H1 (cell line): ENCODE measurements at regions of chr20 and their contacts with region 1.

Region 1: DNA sequence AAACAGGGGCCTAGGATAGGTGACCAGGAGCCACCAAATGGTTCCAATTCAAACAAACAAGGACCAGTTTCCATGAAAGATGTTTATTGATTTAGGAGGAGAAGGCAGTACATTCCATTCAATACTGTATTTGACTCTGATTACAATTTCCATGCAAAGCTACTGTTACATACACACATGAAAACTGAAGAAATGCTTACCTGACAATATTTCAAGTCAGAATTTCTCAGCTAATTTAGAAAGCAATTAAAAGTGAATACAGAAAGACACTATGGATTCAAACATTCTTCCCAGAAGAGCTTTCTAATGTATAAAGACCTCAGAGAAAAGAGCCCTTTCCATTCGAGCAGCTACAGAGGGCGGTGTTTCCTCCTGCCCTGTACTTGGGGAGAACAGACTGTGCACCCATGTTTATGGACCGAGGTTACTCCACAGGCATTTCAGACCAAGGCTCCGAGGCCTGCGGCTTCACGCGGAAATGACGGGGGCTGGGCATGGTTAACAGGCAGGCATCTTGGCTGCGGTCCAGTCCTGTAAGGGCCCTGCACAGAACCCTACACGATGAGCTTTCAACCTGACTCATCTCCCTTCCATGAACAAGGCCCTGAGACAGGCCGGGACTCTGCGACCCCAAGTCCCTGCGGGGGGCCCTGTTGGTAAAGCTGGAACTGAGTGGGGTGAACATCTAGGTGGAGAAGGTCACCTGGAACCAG is 25.7 kb upstream of the TCFL5 start:
- DNase-seq: no peak
- H3K4me3 ChIP-seq: no peak overlapping the region
- H3K27ac ChIP-seq: no peak overlapping the region
- H3K4me1 ChIP-seq: peaks cover 0 to 19% (median 9%) of the 10 kb centered on the region in 4 experiments; a peak in 5 of 7 replicates
- H3K27me3 ChIP-seq: no peaks in the 10 kb centered on the region
- CTCF ChIP-seq: no peak
- EP300 ChIP-seq: no peak
- POLR2A ChIP-seq: no peak
- RAD21 ChIP-seq: no peak

Region 2: DNA sequence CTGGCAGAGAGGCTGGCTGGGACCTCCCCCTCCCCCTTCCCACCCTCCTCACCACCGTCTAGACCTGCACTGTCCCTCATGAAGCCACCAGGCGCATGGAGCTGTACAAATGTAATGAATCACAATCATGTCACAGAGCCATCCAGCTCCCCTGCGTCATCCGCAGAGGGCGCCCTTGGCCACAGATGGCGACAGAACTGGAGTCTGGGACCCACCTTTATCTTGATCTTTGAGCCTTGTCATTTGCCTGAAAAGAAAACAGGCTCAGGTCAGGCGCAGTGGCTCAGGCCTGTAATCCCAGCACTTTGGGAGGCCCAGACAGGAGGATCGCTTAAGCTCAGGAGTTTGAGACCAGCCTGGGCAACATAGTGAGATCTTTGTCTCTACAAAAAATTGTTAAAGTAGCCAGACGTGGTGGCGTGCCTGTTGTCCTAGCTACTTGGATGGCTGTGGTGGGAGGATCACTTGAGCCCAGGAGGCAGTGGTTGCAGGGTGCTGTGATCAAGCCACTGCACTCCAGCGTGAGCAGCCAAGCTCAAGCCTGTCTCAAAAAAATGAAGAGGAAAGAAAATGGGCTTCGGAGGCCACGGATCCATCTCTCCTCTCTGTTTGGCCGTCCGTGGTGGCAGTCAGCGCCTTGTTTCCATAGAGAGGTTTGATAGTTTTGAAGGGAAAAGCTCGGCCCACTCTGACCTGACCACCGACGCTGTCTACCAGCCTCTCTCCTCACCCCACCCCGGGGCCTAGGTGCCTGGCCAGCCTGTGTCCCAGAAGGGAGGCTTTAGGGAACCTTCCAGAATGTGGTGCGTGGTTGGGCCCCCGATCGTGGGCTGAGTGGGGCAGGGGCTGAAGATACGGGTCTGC is 64.3 kb before region 1 on chr20:
- CTCF ChIA-PET with region 1: no interaction called
- POLR2A ChIA-PET with region 1: no interaction called
- DNase-seq: peak in 1 of 2 experiments; percentile 57
- H3K4me3 ChIP-seq: no peak overlapping the region
- H3K27ac ChIP-seq: no peak overlapping the region
- H3K4me1 ChIP-seq: peaks cover 0 to 19% (median 10%) of the 10 kb centered on the region in 4 experiments; a peak in 5 of 7 replicates
- H3K27me3 ChIP-seq: no peaks in the 10 kb centered on the region
- CTCF ChIP-seq: peak; percentile 66 to 70 (median 69)
- EP300 ChIP-seq: no peak
- POLR2A ChIP-seq: no peak
- RAD21 ChIP-seq: peak; percentile 67 to 75

Region 3: GRCh38 chr20:62875419-62876361 is 11.6 kb before region 1 on chr20:
- CTCF ChIA-PET with region 1: interaction called, 8 read pairs
- POLR2A ChIA-PET with region 1: interaction called, 35 read pairs
- DNase-seq: no peak
- H3K4me3 ChIP-seq: no peak overlapping the region
- H3K27ac ChIP-seq: no peak overlapping the region
- H3K4me1 ChIP-seq: peaks cover 0 to 3% (median 0%) of the 10 kb centered on the region in 4 experiments; a peak in 3 of 7 replicates
- H3K27me3 ChIP-seq: no peaks in the 10 kb centered on the region
- CTCF ChIP-seq: no peak
- EP300 ChIP-seq: no peak
- POLR2A ChIP-seq: no peak
- RAD21 ChIP-seq: no peak